Naive thymus-derived CD4-positive, alpha-beta T cell (primary cell): ENCODE measurements at regions of chr7 and their contacts with region 1.

Region 1: GRCh38 chr7:104943502-104944343 is 70.3 kb upstream of the KMT2E start:
- DNase-seq: peak; percentile 31 to 85 (median 68)
- ATAC-seq: peak; percentile 23
- H3K4me3 ChIP-seq: peak overlapping the region; percentile 40
- H3K4me3 Mint-ChIP-seq: peak overlapping the region; percentile 77 to 95 (median 88)
- H3K27ac ChIP-seq: peak overlapping the region; percentile 87
- H3K27ac Mint-ChIP-seq: peak overlapping the region; percentile 95 to 100 (median 100)
- H3K4me1 ChIP-seq: peaks cover 46 to 50% of the 10 kb centered on the region in 2 donors
- H3K4me1 Mint-ChIP-seq: peaks cover 45 to 79% (median 70%) of the 10 kb centered on the region in 7 donors
- H3K27me3 ChIP-seq: no peaks in the 10 kb centered on the region
- H3K27me3 Mint-ChIP-seq: peaks cover 0 to 2% (median 0%) of the 10 kb centered on the region in 5 donors

Region 2: DNA sequence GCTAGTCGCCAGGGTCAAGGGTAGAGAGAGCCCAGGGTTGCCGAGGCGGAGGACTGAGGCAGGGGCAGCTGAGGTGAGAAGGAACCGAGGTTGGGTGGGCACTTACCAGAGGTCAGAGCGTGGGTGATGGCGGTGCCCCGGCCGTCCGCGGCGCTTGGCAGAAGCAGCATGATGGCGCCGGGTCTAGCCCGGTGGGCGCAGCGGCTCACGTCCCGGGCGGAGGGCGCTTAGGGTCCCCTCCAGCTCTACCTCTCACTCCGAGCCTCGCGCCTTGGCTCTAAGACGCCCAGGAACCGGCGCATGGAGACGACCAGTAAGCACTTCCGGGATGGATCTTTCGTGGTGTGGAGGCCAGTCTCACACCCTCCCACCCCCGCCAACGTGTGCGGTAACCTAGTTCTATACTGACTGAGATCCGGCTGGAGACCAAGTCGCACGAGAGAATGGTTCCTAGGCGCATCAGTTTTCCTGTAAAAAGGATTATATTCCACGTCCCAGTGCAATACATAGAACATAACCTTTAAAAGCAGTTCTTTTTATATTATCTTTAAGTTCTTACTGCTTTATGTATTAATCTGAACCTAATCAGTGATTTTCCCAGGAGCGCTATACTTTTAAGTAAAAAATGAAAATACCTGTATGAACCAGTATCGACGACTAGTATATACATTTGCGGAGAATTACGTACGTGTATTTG is 1599.1 kb before region 1 on chr7 and contains the start of gene DNAJC2:
- CTCF ChIA-PET with region 1: no interaction called
- POLR2A ChIA-PET with region 1: no interaction called
- intact Hi-C with region 1: loop called in 1 of 2 experiments (anchors 5 kb)
- DNase-seq: peak; percentile 61 to 88 (median 83)
- ATAC-seq: peak; percentile 94
- H3K4me3 ChIP-seq: peak within 1 kb of the TSS; percentile 97
- H3K4me3 Mint-ChIP-seq: peak within 1 kb of the TSS; percentile 93 to 100 (median 98)
- H3K27ac ChIP-seq: peak within 1 kb of the TSS; percentile 86
- H3K27ac Mint-ChIP-seq: peak within 1 kb of the TSS; percentile 93 to 99 (median 97)
- H3K4me1 ChIP-seq: peaks cover 22 to 26% of the 10 kb centered on the region in 2 donors
- H3K4me1 Mint-ChIP-seq: peaks cover 31 to 84% (median 72%) of the 10 kb centered on the region in 7 donors
- H3K27me3 ChIP-seq: no peaks in the 10 kb centered on the region
- H3K27me3 Mint-ChIP-seq: no peaks in the 10 kb centered on the region
- total RNA-seq, gene DNAJC2: 30.1 to 52.7 (median 38.0) TPM

Region 3: GRCh38 chr7:104956753-104957450 is 13.2 kb after region 1 on chr7:
- CTCF ChIA-PET with region 1: no interaction called
- POLR2A ChIA-PET with region 1: interaction called, 6 read pairs
- intact Hi-C with region 1: loop called in 1 of 2 experiments (anchors 1 kb)
- DNase-seq: peak in 1 of 9 donors; percentile 61
- ATAC-seq: peak; percentile 80
- H3K4me3 ChIP-seq: no peak overlapping the region
- H3K4me3 Mint-ChIP-seq: peak overlapping the region in 1 of 10 donors; percentile 59
- H3K27ac ChIP-seq: no peak overlapping the region
- H3K27ac Mint-ChIP-seq: peak overlapping the region in 5 of 9 donors; percentile 38 to 99 (median 60)
- H3K4me1 ChIP-seq: peaks cover 0 to 19% of the 10 kb centered on the region in 2 donors
- H3K4me1 Mint-ChIP-seq: peaks cover 4 to 61% (median 6%) of the 10 kb centered on the region in 7 donors
- H3K27me3 ChIP-seq: no peaks in the 10 kb centered on the region
- H3K27me3 Mint-ChIP-seq: no peaks in the 10 kb centered on the region

Region 4: GRCh38 chr7:105352018-105352612 is 408.4 kb after region 1 on chr7:
- CTCF ChIA-PET with region 1: no interaction called
- POLR2A ChIA-PET with region 1: interaction called, 8 read pairs
- intact Hi-C with region 1: loop called in 1 of 2 experiments (anchors 1 kb)
- DNase-seq: peak; percentile 22 to 88 (median 82)
- ATAC-seq: peak; percentile 99
- H3K4me3 ChIP-seq: peak overlapping the region; percentile 44
- H3K4me3 Mint-ChIP-seq: peak overlapping the region; percentile 74 to 89 (median 81)
- H3K27ac ChIP-seq: peak overlapping the region; percentile 48
- H3K27ac Mint-ChIP-seq: peak overlapping the region; percentile 73 to 98 (median 92)
- H3K4me1 ChIP-seq: peaks cover 62 to 67% of the 10 kb centered on the region in 2 donors
- H3K4me1 Mint-ChIP-seq: peaks cover 45 to 82% (median 66%) of the 10 kb centered on the region in 7 donors
- H3K27me3 ChIP-seq: no peaks in the 10 kb centered on the region
- H3K27me3 Mint-ChIP-seq: no peaks in the 10 kb centered on the region

Region 5: DNA sequence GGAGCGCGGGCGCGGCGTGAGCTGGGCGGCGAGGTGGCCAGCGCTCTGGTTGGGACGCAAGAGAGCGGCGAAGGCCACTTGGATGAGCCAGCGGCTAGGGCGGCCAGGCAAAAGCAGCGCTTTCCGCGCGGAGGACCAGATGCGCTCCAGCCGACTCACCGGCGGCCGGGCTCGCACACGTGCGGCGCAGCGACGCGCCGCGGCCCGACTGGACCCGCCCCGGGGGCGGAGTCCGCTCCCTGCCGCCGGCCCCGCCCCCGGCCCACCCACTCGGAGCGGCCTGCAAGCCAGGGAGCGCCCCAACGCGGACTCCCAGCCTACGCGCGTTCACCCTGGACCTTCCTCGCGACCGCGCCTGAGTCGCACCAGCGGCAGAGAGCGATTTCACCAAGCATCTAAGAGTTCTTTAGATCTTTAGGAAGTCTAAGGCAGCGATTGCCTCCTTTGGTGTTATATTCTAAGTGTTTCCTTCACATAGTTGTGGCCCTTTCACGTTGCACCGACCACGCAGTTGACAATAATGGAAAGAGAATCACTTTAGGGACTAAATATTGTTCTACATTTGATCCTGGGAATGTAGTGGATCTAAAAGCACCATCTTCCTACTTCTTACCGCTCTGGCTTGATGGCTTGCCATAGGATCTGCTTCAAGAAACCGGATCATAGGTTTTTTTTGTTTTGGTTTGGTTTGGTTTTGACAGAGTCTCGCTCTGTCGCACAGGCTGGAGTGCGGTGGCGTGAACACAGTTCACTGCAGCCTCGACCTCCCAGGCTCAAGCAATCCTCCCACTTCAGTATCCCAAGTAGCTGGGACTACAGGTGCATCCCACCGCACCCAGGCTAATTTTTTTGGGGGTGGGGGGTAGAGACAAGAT is 578.6 kb after region 1 on chr7 and contains the start of gene PUS7:
- CTCF ChIA-PET with region 1: no interaction called
- POLR2A ChIA-PET with region 1: no interaction called
- intact Hi-C with region 1: loop called in 1 of 2 experiments (anchors 2 kb)
- DNase-seq: peak; percentile 53 to 81 (median 67)
- ATAC-seq: peak; percentile 97
- H3K4me3 ChIP-seq: peak within 1 kb of the TSS; percentile 68
- H3K4me3 Mint-ChIP-seq: peak within 1 kb of the TSS; percentile 92 to 99 (median 96)
- H3K27ac ChIP-seq: peak within 1 kb of the TSS; percentile 70
- H3K27ac Mint-ChIP-seq: peak within 1 kb of the TSS; percentile 74 to 96 (median 86)
- H3K4me1 ChIP-seq: peaks cover 5 to 8% of the 10 kb centered on the region in 2 donors
- H3K4me1 Mint-ChIP-seq: peaks cover 0 to 24% (median 17%) of the 10 kb centered on the region in 7 donors
- H3K27me3 ChIP-seq: no peaks in the 10 kb centered on the region
- H3K27me3 Mint-ChIP-seq: peaks cover 0 to 3% (median 0%) of the 10 kb centered on the region in 5 donors
- total RNA-seq, gene PUS7: 4.2 to 16.5 (median 5.4) TPM

Region 6: GRCh38 chr7:105808703-105809590 is 865.2 kb after region 1 on chr7:
- CTCF ChIA-PET with region 1: no interaction called
- POLR2A ChIA-PET with region 1: no interaction called
- intact Hi-C with region 1: loop called in 1 of 2 experiments (anchors 2 kb)
- DNase-seq: peak; percentile 11 to 77 (median 38)
- ATAC-seq: peak; percentile 94
- H3K4me3 ChIP-seq: peak overlapping the region; percentile 25
- H3K4me3 Mint-ChIP-seq: peak overlapping the region in 8 of 10 donors; percentile 1 to 68 (median 31)
- H3K27ac ChIP-seq: peak overlapping the region; percentile 15
- H3K27ac Mint-ChIP-seq: peak overlapping the region in 8 of 9 donors; percentile 0 to 93 (median 45)
- H3K4me1 ChIP-seq: peaks cover 33 to 50% of the 10 kb centered on the region in 2 donors
- H3K4me1 Mint-ChIP-seq: peaks cover 40 to 73% (median 65%) of the 10 kb centered on the region in 7 donors
- H3K27me3 ChIP-seq: no peaks in the 10 kb centered on the region
- H3K27me3 Mint-ChIP-seq: no peaks in the 10 kb centered on the region

Region 7: GRCh38 chr7:106767498-106768323 is 1824.0 kb after region 1 on chr7:
- CTCF ChIA-PET with region 1: no interaction called
- POLR2A ChIA-PET with region 1: no interaction called
- intact Hi-C with region 1: loop called in 1 of 2 experiments (anchors 5 kb)
- DNase-seq: peak in 7 of 9 donors; percentile 5 to 38 (median 18)
- ATAC-seq: peak; percentile 71
- H3K4me3 ChIP-seq: peak overlapping the region; percentile 36
- H3K4me3 Mint-ChIP-seq: peak overlapping the region; percentile 58 to 83 (median 74)
- H3K27ac ChIP-seq: no peak overlapping the region
- H3K27ac Mint-ChIP-seq: peak overlapping the region; percentile 26 to 94 (median 56)
- H3K4me1 ChIP-seq: peaks cover 9 to 15% of the 10 kb centered on the region in 2 donors
- H3K4me1 Mint-ChIP-seq: peaks cover 15 to 33% (median 28%) of the 10 kb centered on the region in 7 donors
- H3K27me3 ChIP-seq: no peaks in the 10 kb centered on the region
- H3K27me3 Mint-ChIP-seq: no peaks in the 10 kb centered on the region